GM23248 (cell line): ENCODE measurements at regions of chr5 and their contacts with region 1.

Region 1: DNA sequence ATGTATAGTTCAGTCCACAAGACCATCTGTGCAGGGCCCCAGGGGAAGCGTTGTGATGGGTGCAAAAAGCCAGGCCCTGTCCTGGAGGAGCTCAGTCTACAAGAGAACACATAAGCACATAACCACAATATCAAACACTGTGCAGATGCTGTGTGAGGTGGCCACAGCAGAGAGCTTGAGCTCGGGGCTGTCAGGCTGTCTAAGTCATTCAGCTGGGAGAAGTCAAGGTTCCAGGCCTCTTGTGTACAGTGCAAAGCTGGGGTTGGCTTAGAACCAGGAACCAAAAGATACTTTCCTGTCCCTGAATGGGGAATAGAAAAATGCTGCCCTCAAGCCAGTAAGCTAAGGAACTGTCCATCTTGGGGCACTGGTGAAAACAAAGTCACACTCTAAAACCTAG is 75.0 kb downstream of the PRDM6 start:
- DNase-seq: peak; percentile 23
- H3K4me3 ChIP-seq: no peak overlapping the region
- H3K27ac ChIP-seq: no peak overlapping the region
- H3K4me1 ChIP-seq: no peaks in the 10 kb centered on the region
- H3K27me3 ChIP-seq: peaks cover 21% of the 10 kb centered on the region; the same call in 1 of the 2 replicates

Region 2: GRCh38 chr5:122500245-122501075 is 663.6 kb before region 1 on chr5:
- in situ Hi-C with region 1: loop called (anchors 10 kb)
- DNase-seq: peak; percentile 81
- H3K4me3 ChIP-seq: peak overlapping the region; percentile 59
- H3K27ac ChIP-seq: no peak overlapping the region
- H3K4me1 ChIP-seq: peaks cover 11% of the 10 kb centered on the region; the same call in 1 of the 2 replicates
- H3K27me3 ChIP-seq: no peaks in the 10 kb centered on the region